ENCODE measurements at regions of chr7 and their contacts with region 1.

Region 1: DNA sequence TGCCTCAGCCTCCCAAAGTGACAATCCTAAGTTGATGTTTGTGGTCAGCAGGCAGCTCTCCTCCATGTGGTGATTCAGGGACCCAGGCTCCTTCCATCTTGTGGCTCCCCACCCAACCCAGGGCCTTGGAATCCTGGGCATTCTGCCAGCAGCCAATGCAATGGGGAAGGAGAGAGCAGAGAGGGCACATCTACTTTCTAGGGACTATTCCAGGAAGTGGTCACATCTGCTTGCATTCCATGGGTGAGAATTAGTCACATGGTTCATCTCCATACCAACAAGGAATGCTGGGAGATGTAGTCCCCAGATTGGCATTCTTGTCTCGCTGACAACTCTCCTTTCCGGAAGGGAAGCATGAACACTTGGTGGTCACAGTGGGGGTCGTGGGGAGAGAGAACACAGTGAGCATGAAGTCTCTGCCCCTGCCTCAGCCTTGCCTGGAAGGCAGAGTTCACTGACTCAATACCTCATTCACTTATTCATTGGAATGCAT is 9.9 kb upstream of the SRRM3 start:
- DNase-seq: no peak
- H3K4me3 ChIP-seq: no peak overlapping the region
- H3K27ac ChIP-seq: no peak overlapping the region
- H3K4me1 ChIP-seq: no peaks in the 10 kb centered on the region
- H3K27me3 ChIP-seq: peaks cover 0 to 15% of the 10 kb centered on the region in 2 donors
- CTCF ChIP-seq: no peak
- POLR2A ChIP-seq: no peak

Region 2: GRCh38 chr7:76166404-76167255 is 25.2 kb before region 1 on chr7:
- intact Hi-C with region 1: loop called (anchors 1 kb)
- DNase-seq: peak; percentile 98 to 99
- H3K4me3 ChIP-seq: peak overlapping the region; percentile 47 to 63 (median 59)
- H3K27ac ChIP-seq: peak overlapping the region; percentile 78 to 96
- H3K4me1 ChIP-seq: no peaks in the 10 kb centered on the region
- H3K27me3 ChIP-seq: no peaks in the 10 kb centered on the region
- CTCF ChIP-seq: peak in 2 of 3 donors; percentile 42 to 55
- POLR2A ChIP-seq: peak; percentile 71